A673 (cell line): ENCODE measurements at regions of chr16 and their contacts with region 1.

Region 1: GRCh38 chr16:13081825-13082331 is 180.5 kb downstream of the SHISA9 start:
- DNase-seq: no peak
- H3K4me3 ChIP-seq: no peak overlapping the region
- H3K27ac ChIP-seq: no peak overlapping the region
- H3K4me1 ChIP-seq: no peaks in the 10 kb centered on the region
- H3K27me3 ChIP-seq: no peaks in the 10 kb centered on the region
- CTCF ChIP-seq: no peak

Region 2: DNA sequence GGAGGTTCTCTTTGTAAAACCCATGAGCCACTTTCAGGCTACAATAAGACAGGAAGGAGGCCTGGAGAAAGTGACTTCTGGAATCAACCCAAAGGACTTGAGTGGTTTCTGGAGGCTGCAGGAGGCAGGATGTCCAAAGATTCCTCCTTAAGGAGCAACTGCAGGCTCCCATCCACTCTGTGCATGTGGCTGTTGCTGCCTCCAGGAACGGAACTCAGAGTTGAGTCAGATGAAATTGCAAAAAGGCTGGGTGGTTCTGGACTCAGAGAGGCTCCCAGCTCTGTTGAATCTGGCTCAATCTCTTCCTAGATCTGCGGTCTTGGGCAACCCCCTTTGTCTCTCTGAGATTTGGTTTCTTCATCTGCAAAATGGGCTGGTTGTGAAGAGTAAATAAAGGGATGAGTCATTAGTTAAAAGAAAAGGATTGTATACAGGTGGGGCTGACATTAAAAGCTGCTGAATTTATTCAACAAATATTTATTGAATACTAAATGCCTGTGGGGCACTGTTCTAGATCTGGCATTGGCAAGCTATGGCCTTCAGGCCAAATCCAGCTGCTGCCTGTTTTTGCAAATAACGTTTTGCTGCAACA is 16.8 kb after region 1 on chr16:
- CTCF ChIA-PET with region 1: no interaction called
- POLR2A ChIA-PET with region 1: no interaction called
- intact Hi-C with region 1: no loop called
- DNase-seq: no peak
- H3K4me3 ChIP-seq: no peak overlapping the region
- H3K27ac ChIP-seq: no peak overlapping the region
- H3K4me1 ChIP-seq: no peaks in the 10 kb centered on the region
- H3K27me3 ChIP-seq: no peaks in the 10 kb centered on the region
- CTCF ChIP-seq: no peak

Region 3: DNA sequence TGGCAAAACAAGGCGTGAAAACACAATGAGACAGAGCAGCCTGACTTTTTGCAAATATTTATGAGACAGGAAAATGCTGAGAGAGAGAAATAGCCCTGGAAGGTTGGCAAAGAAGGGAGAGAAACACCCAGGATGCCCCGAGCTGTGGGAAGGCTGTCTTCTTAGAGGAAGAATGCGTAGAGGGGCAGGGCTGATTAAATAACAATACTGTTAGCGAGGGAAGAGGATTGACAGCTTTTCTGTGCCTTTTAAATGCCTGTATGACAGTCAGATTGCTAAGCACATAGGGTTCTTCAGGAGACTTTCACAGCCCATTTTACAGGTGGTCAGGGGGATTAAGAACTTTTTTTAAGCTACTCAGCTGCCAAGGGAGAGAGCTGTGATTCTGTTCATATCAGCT is 38.7 kb after region 1 on chr16:
- CTCF ChIA-PET with region 1: no interaction called
- POLR2A ChIA-PET with region 1: interaction called, 18 read pairs
- intact Hi-C with region 1: no loop called
- DNase-seq: no peak
- H3K4me3 ChIP-seq: no peak overlapping the region
- H3K27ac ChIP-seq: no peak overlapping the region
- H3K4me1 ChIP-seq: no peaks in the 10 kb centered on the region
- H3K27me3 ChIP-seq: no peaks in the 10 kb centered on the region
- CTCF ChIP-seq: no peak

Region 4: GRCh38 chr16:14325502-14326401 is 1243.9 kb after region 1 on chr16:
- CTCF ChIA-PET with region 1: no interaction called
- POLR2A ChIA-PET with region 1: no interaction called
- intact Hi-C with region 1: no loop called
- DNase-seq: peak; percentile 95
- H3K4me3 ChIP-seq: no peak overlapping the region
- H3K27ac ChIP-seq: peak overlapping the region; percentile 39
- H3K4me1 ChIP-seq: peaks cover 26% of the 10 kb centered on the region
- H3K27me3 ChIP-seq: no peaks in the 10 kb centered on the region
- CTCF ChIP-seq: no peak